ENCODE measurements at regions of chr1 and their contacts with region 1.

Region 1: DNA sequence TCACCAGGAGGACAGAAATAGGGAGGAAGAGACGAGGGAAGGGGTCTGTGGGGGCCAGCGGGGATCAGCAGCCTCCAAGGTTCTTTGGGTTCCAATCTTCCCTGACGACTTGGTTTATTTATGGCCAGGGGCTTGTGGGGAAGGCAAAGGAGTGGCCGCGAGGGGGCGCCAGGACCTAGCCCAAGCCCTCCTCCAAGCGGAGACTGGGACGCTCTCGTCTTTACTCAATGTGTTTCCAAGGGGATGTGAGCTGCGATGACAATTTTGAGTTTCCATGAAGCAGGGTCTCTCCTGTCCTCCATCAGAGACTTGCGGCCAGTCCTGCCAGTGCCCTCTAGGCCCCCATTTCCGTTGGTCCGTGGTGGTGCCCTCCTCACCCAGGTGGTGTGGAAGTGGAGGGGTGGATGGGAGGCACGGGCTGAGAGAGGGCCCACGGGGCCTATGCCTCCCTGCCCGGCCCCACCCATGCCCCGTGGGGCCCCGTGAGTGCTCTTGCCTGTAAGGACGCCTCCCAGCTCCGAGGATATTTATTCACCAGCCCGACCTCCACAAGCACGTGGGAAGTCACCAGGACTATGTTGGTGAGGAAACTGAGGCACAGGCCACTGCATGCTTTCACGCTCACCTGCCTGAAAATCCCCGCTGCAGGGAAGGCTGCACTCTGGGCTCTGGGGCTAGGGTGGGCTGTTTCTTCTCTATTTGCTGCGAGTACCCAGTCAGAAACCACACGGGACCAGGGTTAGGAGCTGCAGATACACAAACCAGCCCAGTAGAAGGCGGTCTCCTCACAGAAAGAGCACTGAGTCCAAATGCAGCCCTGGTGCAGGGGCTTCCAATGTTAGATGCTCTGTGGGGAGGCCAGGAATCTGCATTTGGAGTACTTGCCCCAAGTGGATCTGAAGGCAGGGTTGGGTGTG is 26.5 kb downstream of the DMRTB1 start:
- DNase-seq: peak; percentile 93
- ATAC-seq: peak; percentile 87
- H3K4me3 Mint-ChIP-seq: no peak overlapping the region
- H3K27ac Mint-ChIP-seq: no peak overlapping the region
- H3K4me1 Mint-ChIP-seq: peaks cover 13% of the 10 kb centered on the region
- H3K27me3 Mint-ChIP-seq: no peaks in the 10 kb centered on the region; the same call in 1 of the 2 replicates
- CTCF ChIP-seq: peak; percentile 74

Region 2: DNA sequence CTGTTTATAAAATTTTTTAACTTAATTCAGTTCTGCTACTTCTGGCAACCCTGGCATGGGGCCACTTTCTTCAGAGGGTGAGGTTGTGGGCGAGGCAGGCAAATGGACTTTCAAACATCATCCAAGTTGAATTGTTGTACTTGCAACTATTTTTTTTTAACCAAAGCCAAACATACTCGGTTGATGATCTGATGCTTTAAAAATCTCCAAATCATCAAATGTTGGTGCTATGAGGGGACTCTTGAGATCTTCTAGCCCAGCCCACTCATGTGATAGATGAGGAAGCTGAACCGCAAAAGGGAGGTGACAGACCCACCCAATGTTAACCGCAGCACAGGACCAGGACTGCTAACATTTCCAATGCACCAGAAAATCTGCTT is 350.0 kb before region 1 on chr1:
- CTCF ChIA-PET with region 1: no interaction called
- POLR2A ChIA-PET with region 1: no interaction called
- DNase-seq: no peak
- ATAC-seq: no peak
- H3K4me3 Mint-ChIP-seq: no peak overlapping the region
- H3K27ac Mint-ChIP-seq: no peak overlapping the region
- H3K4me1 Mint-ChIP-seq: 0 out of 2 replicates have a peak, but pooled peaks cover 7% of the 10 kb centered on the region
- H3K27me3 Mint-ChIP-seq: peaks cover 2% of the 10 kb centered on the region; the same call in 1 of the 2 replicates
- CTCF ChIP-seq: no peak

Region 3: DNA sequence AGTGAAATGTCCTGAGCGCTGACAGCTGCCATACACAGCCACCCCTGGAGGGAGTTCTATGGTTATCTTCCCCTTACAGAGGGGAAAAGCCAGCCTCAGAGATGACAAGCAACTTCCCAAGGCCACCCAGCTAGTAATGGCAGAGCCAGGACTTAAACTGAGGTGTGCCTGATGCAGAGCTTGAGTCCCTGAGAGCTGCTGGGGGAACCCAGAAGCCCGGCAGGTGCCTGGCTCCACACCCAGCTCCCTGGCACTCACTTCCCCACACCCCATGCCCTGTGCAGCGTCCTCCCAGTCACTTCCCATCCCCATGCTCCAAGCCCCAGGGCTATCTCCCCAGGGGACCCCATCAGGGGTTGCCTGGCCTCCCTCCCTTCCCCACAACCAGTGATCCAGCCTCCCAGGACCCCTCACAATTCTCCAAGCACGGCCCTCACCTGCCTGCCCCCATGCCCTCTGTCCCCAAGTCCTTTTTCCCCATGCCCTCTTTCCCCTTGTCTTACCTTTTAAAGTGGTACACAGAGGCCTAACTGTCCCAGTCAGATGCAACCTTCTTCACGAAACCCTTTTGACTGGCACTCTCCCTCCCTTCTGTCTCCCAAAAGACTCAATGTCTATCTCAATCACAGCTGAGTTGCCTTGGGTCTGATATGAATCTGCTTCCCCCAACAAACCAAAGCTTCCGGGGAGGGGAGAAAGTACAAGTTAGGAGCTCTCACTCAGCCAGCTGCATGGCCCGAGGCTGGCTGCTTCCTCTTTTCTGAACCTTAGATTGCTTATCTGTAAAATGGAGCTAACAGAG is 118.0 kb before region 1 on chr1:
- CTCF ChIA-PET with region 1: no interaction called
- POLR2A ChIA-PET with region 1: no interaction called
- DNase-seq: no peak
- ATAC-seq: no peak
- H3K4me3 Mint-ChIP-seq: no peak overlapping the region
- H3K27ac Mint-ChIP-seq: no peak overlapping the region
- H3K4me1 Mint-ChIP-seq: no peaks in the 10 kb centered on the region
- H3K27me3 Mint-ChIP-seq: peaks cover 37% of the 10 kb centered on the region
- CTCF ChIP-seq: no peak

Region 4: GRCh38 chr1:53381790-53382401 is 103.8 kb before region 1 on chr1:
- CTCF ChIA-PET with region 1: no interaction called
- POLR2A ChIA-PET with region 1: no interaction called
- DNase-seq: no peak
- ATAC-seq: no peak
- H3K4me3 Mint-ChIP-seq: no peak overlapping the region
- H3K27ac Mint-ChIP-seq: no peak overlapping the region
- H3K4me1 Mint-ChIP-seq: peaks cover 8% of the 10 kb centered on the region
- H3K27me3 Mint-ChIP-seq: peaks cover 35% of the 10 kb centered on the region
- CTCF ChIP-seq: no peak

Region 5: GRCh38 chr1:53450225-53450624 is 35.5 kb before region 1 on chr1:
- CTCF ChIA-PET with region 1: interaction called, 14 read pairs
- POLR2A ChIA-PET with region 1: no interaction called
- DNase-seq: peak; percentile 44
- ATAC-seq: no peak; the same call in 1 of the 2 replicates
- H3K4me3 Mint-ChIP-seq: no peak overlapping the region
- H3K27ac Mint-ChIP-seq: peak overlapping the region; percentile 95
- H3K4me1 Mint-ChIP-seq: peaks cover 75% of the 10 kb centered on the region
- H3K27me3 Mint-ChIP-seq: no peaks in the 10 kb centered on the region; the same call in 1 of the 2 replicates
- CTCF ChIP-seq: peak; percentile 53

Region 6: DNA sequence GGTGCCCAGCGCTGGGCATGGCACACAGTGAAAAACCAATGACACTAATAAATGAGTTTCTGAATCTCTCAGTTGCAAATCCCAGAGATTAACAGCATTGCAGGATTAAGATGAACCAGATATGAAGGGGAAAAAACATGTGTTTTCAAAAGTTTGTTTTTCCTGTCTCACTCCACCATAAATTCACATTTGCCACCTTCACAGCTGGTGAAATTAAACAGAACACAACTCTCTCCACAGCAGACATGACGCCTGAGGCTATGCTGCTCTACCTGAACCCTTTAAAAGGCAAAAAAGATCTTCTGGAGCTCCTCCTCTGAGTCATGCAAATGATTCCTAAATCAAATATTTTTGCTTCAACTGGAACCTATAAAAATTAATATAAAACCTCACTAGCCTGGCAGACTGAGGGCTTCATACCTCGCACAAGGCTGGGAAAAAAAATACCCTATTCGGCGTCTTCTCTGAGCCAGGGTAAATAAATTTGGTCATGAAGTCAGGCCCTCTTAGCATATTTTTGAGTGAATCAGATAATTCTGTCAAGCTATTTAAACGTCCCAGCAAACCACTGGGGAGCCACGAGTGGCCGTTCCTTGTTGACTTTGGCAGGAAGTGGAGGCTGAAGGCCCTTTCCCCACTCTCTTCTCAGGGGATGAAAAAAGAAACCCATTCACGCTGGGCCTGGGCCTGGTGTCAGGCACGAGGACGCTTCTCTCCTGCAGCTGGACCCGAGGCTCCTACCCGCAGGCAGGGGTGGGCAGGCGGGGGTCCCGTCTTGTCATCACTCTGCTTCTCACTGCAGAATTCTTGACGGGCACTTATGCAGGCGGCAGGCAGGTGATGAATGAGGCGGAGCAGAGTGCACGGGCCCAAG is 26.4 kb after region 1 on chr1:
- CTCF ChIA-PET with region 1: interaction called, 20 read pairs
- POLR2A ChIA-PET with region 1: no interaction called
- DNase-seq: no peak
- ATAC-seq: no peak
- H3K4me3 Mint-ChIP-seq: no peak overlapping the region
- H3K27ac Mint-ChIP-seq: 0 out of 2 replicates have a peak overlapping the region, but pooled peaks have one; percentile 21
- H3K4me1 Mint-ChIP-seq: peaks cover 14% of the 10 kb centered on the region; the same call in 1 of the 2 replicates
- H3K27me3 Mint-ChIP-seq: no peaks in the 10 kb centered on the region
- CTCF ChIP-seq: no peak

Region 7: DNA sequence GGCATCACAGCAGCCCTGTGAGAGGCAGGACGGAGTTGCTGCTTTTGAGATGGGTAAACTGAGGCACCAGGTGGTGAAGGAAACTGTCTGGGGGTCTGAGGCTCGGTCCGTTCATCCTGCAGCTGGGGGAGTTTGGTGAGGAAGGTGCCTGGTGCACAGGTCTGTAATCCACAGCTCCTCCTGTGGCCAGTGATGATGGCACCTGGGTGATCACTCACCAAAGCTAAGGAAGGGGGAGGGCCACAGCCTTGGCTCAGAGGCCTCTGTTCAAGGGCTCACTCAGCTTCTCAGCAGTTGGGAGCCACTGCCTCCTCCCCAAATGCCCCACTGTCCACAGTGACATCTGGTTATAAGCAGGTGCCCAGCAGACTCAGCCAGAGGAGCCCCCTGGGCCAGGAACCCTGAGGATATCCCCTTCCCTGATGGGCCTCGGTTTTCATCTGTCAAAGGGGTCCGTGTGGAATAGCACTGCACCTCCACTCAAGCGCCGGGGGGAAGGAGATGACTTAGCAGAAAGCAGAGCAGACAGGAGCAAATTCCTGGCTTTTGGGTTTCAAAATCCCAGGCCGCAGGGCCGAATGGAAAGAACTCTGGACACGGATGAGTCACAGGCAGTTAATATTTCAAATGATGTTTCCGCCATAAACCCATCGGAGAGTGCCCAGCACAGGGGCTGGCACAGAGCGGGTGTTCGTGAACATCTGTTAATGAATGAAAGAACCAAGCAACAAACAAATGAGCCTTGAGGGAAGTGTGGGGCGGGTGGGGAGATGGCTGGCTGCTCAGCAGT is 56.2 kb after region 1 on chr1:
- CTCF ChIA-PET with region 1: interaction called, 28 read pairs
- POLR2A ChIA-PET with region 1: no interaction called
- DNase-seq: peak; percentile 62
- ATAC-seq: peak; percentile 86
- H3K4me3 Mint-ChIP-seq: no peak overlapping the region
- H3K27ac Mint-ChIP-seq: no peak overlapping the region
- H3K4me1 Mint-ChIP-seq: no peaks in the 10 kb centered on the region; the same call in 1 of the 2 replicates
- H3K27me3 Mint-ChIP-seq: no peaks in the 10 kb centered on the region
- CTCF ChIP-seq: no peak

Region 8: GRCh38 chr1:53592521-53592982 is 106.8 kb after region 1 on chr1:
- CTCF ChIA-PET with region 1: interaction called, 192 read pairs
- POLR2A ChIA-PET with region 1: no interaction called
- DNase-seq: peak; percentile 47
- ATAC-seq: peak; percentile 37
- H3K4me3 Mint-ChIP-seq: no peak overlapping the region
- H3K27ac Mint-ChIP-seq: no peak overlapping the region
- H3K4me1 Mint-ChIP-seq: peaks cover 21% of the 10 kb centered on the region
- H3K27me3 Mint-ChIP-seq: peaks cover 3% of the 10 kb centered on the region; the same call in 1 of the 2 replicates
- CTCF ChIP-seq: no peak

Region 9: GRCh38 chr1:53715478-53715877 is 229.7 kb after region 1 on chr1:
- CTCF ChIA-PET with region 1: interaction called, 12 read pairs
- POLR2A ChIA-PET with region 1: no interaction called
- DNase-seq: peak; percentile 79
- ATAC-seq: peak; percentile 98
- H3K4me3 Mint-ChIP-seq: no peak overlapping the region
- H3K27ac Mint-ChIP-seq: no peak overlapping the region
- H3K4me1 Mint-ChIP-seq: no peaks in the 10 kb centered on the region; the same call in 1 of the 2 replicates
- H3K27me3 Mint-ChIP-seq: no peaks in the 10 kb centered on the region; the same call in 1 of the 2 replicates
- CTCF ChIP-seq: 0 out of 2 replicates have a peak, but pooled peaks have one; percentile 49

Measured in WTC11 (cell line).